ENCODE measurements at regions of chr5 and their contacts with region 1.

Region 1: DNA sequence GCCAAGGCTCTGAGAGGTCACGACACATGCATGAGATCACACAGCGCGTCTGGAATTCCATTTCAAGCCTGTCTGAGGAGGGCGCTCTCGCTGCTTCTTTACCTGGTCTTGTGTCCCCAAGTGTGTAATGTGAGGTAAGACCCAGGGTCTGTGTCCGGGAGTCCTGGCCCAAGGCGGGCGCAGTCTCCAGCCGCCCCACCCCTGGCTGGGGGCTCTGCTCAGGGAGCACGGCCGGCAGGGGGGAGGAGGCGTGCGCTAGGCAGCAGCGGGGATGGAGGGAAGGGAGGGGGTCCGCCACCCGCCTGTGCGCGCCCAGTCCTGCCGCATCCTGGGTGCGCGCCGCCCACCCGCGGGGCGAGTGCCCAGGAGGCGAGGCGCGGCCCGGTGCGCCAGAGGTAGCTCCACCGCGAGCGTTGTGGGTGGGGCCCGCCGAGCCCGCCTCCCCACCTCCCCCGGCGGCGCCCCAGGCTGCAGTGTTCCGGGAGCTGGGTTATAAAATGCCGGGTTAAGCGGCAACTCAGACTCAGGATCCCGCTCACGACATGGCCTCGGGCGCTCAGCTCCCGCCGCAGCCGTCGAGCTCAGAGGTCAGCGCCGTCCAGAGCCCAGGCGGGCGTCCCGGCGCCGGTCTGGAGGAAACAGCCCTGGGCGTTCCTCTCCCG is at the start of gene CCNI2:
- DNase-seq: peak; percentile 80
- H3K4me3 Mint-ChIP-seq: peak within 1 kb of the TSS; percentile 71
- H3K27ac Mint-ChIP-seq: no peak within 1 kb of the TSS
- H3K4me1 Mint-ChIP-seq: peaks cover 22% of the 10 kb centered on the region
- H3K27me3 Mint-ChIP-seq: no peaks in the 10 kb centered on the region
- total RNA-seq, gene CCNI2: 1.4 to 2.5 TPM

Region 2: DNA sequence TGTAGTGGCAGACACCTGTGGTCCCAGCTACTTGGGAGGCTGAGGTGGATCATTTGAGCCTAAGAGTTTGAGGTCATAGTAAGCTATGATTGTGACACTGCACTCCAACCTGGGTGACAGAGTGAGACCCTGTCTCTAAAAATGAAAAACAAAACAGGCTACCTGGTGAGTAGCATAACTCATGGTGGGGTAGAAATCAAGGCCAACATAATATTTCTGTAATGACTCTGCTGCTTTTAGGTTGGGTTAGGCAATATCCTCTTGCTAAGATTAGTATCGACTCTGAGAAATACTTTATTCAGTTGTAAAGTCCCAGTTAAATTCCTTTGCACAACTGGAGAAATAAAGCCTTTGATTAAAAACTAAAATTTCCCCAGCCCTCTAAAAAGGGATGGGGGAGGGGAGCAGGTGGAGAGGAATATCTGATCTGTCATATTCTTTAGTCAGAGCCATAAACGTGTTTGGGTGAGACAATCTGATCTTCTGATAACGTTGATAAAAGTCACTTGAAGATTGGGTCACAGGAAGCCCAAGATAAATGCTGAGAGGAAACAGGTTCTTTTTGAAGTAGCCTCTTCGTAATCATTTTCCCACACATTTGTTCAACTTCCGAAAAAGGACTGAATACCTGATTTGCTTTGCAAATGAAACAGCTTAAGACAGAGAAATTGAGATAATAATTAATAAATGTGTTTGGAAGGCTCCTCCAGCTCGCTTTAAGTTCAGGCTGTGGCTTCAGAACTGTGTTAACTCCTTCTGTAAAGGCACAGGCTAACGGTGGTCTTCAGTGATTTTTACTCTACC is 58.3 kb before region 1 on chr5:
- CTCF ChIA-PET with region 1: no interaction called
- intact Hi-C with region 1: loop called (anchors 1 kb)
- DNase-seq: peak; percentile 69
- H3K4me3 Mint-ChIP-seq: no peak overlapping the region
- H3K27ac Mint-ChIP-seq: peak overlapping the region; percentile 17
- H3K4me1 Mint-ChIP-seq: peaks cover 27% of the 10 kb centered on the region
- H3K27me3 Mint-ChIP-seq: no peaks in the 10 kb centered on the region

Region 3: DNA sequence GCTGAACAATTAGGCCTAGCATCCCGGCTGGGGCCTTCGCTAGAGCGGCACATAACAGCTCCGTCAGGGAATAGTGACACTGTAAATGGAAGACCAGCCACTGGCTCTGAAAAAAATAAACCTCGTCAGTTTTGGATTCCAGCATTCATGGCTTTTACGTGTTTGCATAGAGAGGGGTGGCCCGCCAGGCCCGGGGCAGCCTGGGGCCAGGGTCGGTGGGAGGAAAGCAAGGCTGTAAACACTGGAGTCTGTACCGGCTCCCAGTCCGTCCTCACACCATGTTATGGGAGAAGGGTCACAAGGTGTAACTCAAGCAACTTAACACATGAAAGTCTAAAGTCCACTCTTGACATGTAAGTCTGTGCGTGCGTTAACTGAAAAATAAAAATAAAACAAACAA is 11.4 kb after region 1 on chr5:
- CTCF ChIA-PET with region 1: interaction called, 10 read pairs
- intact Hi-C with region 1: no loop called
- DNase-seq: no peak
- H3K4me3 Mint-ChIP-seq: no peak overlapping the region
- H3K27ac Mint-ChIP-seq: no peak overlapping the region
- H3K4me1 Mint-ChIP-seq: peaks cover 10% of the 10 kb centered on the region
- H3K27me3 Mint-ChIP-seq: no peaks in the 10 kb centered on the region

Region 4: GRCh38 chr5:132777209-132778069 is 30.4 kb after region 1 on chr5 and contains the start of gene SEPTIN8:
- CTCF ChIA-PET with region 1: interaction called, 3 read pairs
- intact Hi-C with region 1: loop called (anchors 1 kb)
- DNase-seq: peak; percentile 55
- H3K4me3 Mint-ChIP-seq: peak within 1 kb of the TSS; percentile 67
- H3K27ac Mint-ChIP-seq: no peak within 1 kb of the TSS
- H3K4me1 Mint-ChIP-seq: peaks cover 10% of the 10 kb centered on the region
- H3K27me3 Mint-ChIP-seq: peaks cover 26% of the 10 kb centered on the region
- total RNA-seq, gene SEPTIN8: 24.9 to 29.2 TPM

Measured in activated naive CD4-positive, alpha-beta T cell treated with anti-CD3 and anti-CD28 coated beads for 36 hours (primary cell).